PC-9 (cell line): ENCODE measurements at regions of chr9 and their contacts with region 1.

Region 1: GRCh38 chr9:4762108-4762885 is 21.3 kb upstream of the AK3 start:
- DNase-seq: peak in 1 of 2 experiments; percentile 59
- H3K4me3 ChIP-seq: no peak overlapping the region
- H3K27ac ChIP-seq: no peak overlapping the region
- H3K4me1 ChIP-seq: 0 out of 2 replicates have a peak, but pooled peaks cover 3% of the 10 kb centered on the region
- H3K27me3 ChIP-seq: no peaks in the 10 kb centered on the region
- CTCF ChIP-seq: peak; percentile 78

Region 2: DNA sequence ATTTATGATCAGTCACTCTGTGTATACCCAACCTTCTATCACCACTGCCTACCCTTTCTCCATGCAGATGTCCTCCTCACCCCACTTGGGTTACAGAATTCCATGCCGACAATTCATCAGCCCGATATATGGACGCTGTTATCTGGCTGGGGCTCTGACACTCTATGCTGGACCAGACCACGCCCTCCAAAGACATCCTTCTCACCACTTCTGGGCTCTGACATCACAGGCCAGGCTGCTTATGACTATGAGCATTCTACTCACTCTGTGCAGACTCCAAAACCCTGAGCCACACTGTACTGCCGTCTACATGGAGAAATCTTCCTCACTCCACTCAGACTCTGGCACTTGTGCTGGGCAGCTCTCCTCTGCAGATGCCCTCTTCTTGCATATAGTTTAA is 13.7 kb before region 1 on chr9:
- CTCF ChIA-PET with region 1: no interaction called
- POLR2A ChIA-PET with region 1: no interaction called
- intact Hi-C with region 1: no loop called
- DNase-seq: no peak
- H3K4me3 ChIP-seq: no peak overlapping the region
- H3K27ac ChIP-seq: no peak overlapping the region
- H3K4me1 ChIP-seq: no peaks in the 10 kb centered on the region
- H3K27me3 ChIP-seq: no peaks in the 10 kb centered on the region
- CTCF ChIP-seq: no peak

Region 3: DNA sequence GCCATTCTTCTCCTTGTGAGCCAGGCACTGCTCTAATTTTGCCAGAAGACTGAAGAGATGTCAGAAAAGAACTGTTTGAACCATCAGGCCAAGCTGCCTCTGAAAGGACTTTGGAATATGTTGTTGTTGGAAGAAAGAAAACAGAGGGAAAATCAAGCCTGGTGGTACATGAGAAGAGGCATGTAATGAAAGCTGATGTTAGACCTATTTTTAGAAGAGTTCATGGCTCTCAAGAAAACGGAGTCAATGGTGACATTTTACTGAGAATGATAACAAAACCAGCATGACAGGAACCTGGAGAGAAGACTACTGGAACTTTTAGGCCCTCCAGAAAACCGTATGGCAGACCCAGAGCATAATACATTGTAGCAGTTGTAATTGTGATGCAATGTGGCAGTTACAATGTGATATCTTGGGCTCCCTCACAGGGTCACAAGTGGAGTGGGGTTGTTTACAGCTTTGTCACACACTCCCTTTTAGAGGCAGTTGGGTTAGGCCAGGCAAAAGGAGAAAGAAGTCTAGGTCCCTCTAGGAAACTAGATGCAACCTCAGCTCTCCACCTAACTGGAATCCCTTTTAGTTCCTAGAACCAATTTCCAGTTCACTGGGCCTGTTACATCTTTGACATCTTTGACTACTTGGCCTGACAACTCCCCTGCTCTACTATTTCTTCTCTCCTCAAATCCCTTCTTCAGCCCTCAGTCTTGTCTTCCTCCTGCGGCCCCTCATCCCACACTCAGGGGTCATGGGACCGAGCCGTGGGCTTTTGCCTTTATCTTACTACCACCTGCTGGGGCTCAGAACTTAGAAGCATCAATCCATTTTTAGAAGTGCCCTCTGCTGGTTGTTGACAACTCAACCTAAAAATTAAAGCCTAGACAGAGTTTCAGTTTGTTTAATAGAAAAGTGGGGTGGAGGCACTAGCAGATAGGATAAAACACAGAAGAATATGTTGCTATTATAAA is 161.6 kb after region 1 on chr9:
- CTCF ChIA-PET with region 1: no interaction called
- POLR2A ChIA-PET with region 1: no interaction called
- intact Hi-C with region 1: loop called (anchors 10 kb)
- DNase-seq: no peak
- H3K4me3 ChIP-seq: no peak overlapping the region
- H3K27ac ChIP-seq: no peak overlapping the region
- H3K4me1 ChIP-seq: no peaks in the 10 kb centered on the region
- H3K27me3 ChIP-seq: no peaks in the 10 kb centered on the region
- CTCF ChIP-seq: peak; percentile 45

Region 4: DNA sequence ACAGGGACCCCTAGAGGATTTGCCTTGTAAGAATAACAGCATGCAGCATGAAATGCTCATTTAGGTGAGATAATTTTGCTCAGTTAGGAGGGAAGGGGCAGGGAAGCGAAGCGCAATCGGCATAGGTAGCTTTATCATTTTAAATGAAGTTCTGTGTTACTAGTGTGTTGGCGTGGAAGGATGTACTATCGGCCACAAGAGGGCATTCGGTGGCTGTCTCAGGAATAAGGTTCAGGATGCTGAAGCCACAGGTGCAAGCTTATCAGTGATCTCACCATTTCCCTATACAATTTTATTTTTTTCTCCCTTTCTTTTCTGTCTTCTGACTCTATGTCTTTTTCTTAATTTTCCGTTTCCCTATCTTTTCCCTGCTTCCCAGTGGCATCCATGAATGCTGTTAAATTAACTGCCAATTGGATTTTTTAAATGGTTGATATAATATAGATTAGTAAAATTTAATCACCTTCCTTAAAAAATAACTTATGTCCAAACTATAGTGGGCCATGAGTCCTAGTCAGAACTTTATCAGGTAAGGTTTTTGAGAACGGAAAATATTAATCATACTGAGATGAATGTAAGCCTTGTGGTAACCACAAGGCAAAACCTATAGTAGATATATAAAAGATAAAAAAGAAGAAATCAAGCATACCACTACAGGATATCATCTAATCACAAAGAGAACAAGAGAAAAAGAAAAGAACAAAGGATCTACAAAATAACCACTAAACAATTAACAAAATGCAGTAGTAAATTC is 424.3 kb after region 1 on chr9:
- CTCF ChIA-PET with region 1: no interaction called
- POLR2A ChIA-PET with region 1: no interaction called
- intact Hi-C with region 1: loop called (anchors 1 kb)
- DNase-seq: peak; percentile 44 to 46
- H3K4me3 ChIP-seq: no peak overlapping the region
- H3K27ac ChIP-seq: no peak overlapping the region
- H3K4me1 ChIP-seq: no peaks in the 10 kb centered on the region
- H3K27me3 ChIP-seq: no peaks in the 10 kb centered on the region
- CTCF ChIP-seq: peak; percentile 71

Region 5: GRCh38 chr9:5425006-5425628 is 662.8 kb after region 1 on chr9:
- CTCF ChIA-PET with region 1: no interaction called
- POLR2A ChIA-PET with region 1: no interaction called
- intact Hi-C with region 1: loop called (anchors 2 kb)
- DNase-seq: no peak
- H3K4me3 ChIP-seq: no peak overlapping the region
- H3K27ac ChIP-seq: no peak overlapping the region
- H3K4me1 ChIP-seq: no peaks in the 10 kb centered on the region
- H3K27me3 ChIP-seq: no peaks in the 10 kb centered on the region
- CTCF ChIP-seq: peak; percentile 67

Region 6: DNA sequence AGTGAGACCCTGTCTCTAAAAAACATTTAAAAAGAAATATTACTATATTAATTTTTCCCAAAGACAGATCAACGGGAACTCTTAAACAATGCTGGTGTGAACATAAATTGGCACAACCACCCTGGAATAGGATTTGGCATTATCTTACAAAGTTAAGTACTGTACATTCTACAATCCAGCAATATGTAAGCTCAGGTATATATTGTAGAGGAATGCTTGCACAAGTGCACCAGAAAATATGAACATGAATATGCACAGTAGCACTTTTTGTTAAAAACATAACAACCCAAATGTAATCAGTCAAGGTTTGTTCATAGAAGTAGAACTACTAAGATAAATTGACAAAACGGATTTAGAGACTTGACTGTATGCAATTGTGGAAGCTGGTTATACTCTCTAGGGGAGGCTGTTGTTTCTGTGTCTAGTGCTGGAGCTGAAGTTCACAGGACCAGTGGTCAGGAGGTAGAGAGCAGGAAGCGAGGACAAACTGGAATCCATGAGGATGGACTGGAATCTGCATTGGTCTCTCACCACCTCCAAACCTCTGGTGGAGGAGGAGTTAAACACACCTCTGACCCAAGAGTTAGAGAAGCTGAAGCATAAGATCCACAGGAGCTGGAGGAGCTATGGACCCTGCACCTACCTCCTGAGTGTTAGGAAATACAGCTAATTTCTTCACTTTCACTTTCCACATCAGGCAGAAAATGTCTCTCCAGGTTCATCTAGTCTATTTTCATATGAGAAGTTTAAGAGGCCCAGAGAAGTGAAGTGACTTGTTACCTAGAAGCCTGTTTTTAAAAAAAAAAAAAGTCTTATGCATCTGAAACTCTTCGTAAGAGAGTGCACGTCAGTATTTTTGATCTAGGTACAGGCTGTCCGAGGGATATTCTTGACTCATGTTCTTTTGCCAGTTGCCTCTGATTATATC is 846.3 kb after region 1 on chr9:
- CTCF ChIA-PET with region 1: no interaction called
- POLR2A ChIA-PET with region 1: no interaction called
- intact Hi-C with region 1: loop called (anchors 5 kb)
- DNase-seq: no peak
- H3K4me3 ChIP-seq: no peak overlapping the region
- H3K27ac ChIP-seq: no peak overlapping the region
- H3K4me1 ChIP-seq: no peaks in the 10 kb centered on the region
- H3K27me3 ChIP-seq: no peaks in the 10 kb centered on the region
- CTCF ChIP-seq: no peak